ENCODE measurements at regions of chr20 and their contacts with region 1.

Region 1: GRCh38 chr20:2086177-2086979 is 15.2 kb upstream of the STK35 start:
- DNase-seq: no peak
- ATAC-seq: peak; percentile 34 to 62 (median 54)
- H3K4me3 ChIP-seq: no peak overlapping the region
- H3K27ac ChIP-seq: no peak overlapping the region
- H3K4me1 ChIP-seq: peaks cover 0 to 3% (median 0%) of the 10 kb centered on the region in 12 donors
- H3K27me3 ChIP-seq: peaks cover 0 to 35% (median 3%) of the 10 kb centered on the region in 9 donors
- CTCF ChIP-seq: peak in 9 of 12 donors; percentile 17 to 47 (median 34)
- POLR2A ChIP-seq: no peak

Region 2: DNA sequence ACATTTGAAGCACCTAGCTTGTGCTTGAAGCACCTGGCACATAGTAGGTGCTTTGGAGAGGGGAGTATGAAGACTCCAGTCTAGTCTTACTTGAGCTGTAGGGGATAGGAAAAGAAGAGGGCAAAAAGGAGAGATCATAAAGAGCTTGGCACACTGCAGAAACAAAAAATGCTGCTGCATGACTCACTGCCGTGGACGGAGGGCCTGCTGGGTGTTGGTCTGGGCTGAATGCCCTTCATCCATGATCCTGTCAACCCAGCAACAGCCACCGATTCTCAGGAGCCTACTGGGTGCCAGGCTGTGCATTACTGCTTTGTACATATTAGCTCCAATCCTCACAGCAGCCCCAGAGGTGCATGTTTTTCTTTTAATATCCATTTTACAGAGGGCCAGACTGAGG is 98.6 kb before region 1 on chr20:
- intact Hi-C with region 1: loop called in 1 of 10 experiments (anchors 10 kb)
- DNase-seq: no peak
- ATAC-seq: peak in 1 of 4 donors; percentile 58
- H3K4me3 ChIP-seq: no peak overlapping the region
- H3K27ac ChIP-seq: no peak overlapping the region
- H3K4me1 ChIP-seq: no peaks in the 10 kb centered on the region
- H3K27me3 ChIP-seq: peaks cover 0 to 35% (median 16%) of the 10 kb centered on the region in 9 donors
- CTCF ChIP-seq: no peak
- POLR2A ChIP-seq: no peak

Region 3: GRCh38 chr20:2172305-2173175 is 86.2 kb after region 1 on chr20:
- intact Hi-C with region 1: loop called (anchors 1 to 5 kb)
- DNase-seq: peak; percentile 66 to 84 (median 71)
- ATAC-seq: peak; percentile 52 to 88 (median 82)
- H3K4me3 ChIP-seq: no peak overlapping the region
- H3K27ac ChIP-seq: no peak overlapping the region
- H3K4me1 ChIP-seq: peaks cover 0 to 15% (median 2%) of the 10 kb centered on the region in 12 donors
- H3K27me3 ChIP-seq: no peaks in the 10 kb centered on the region
- CTCF ChIP-seq: peak; percentile 78 to 96 (median 90)
- POLR2A ChIP-seq: no peak

Region 4: GRCh38 chr20:2451939-2452732 is 365.8 kb after region 1 on chr20:
- intact Hi-C with region 1: loop called in 1 of 10 experiments (anchors 10 kb)
- DNase-seq: peak; percentile 63 to 70 (median 67)
- ATAC-seq: peak in 3 of 4 donors; percentile 65 to 82 (median 78)
- H3K4me3 ChIP-seq: no peak overlapping the region
- H3K27ac ChIP-seq: no peak overlapping the region
- H3K4me1 ChIP-seq: peaks cover 0 to 5% (median 0%) of the 10 kb centered on the region in 12 donors
- H3K27me3 ChIP-seq: no peaks in the 10 kb centered on the region
- CTCF ChIP-seq: peak; percentile 70 to 92 (median 80)
- POLR2A ChIP-seq: no peak